GM10248 (cell line): ENCODE measurements at regions of chr1 and their contacts with region 1.

Region 1: DNA sequence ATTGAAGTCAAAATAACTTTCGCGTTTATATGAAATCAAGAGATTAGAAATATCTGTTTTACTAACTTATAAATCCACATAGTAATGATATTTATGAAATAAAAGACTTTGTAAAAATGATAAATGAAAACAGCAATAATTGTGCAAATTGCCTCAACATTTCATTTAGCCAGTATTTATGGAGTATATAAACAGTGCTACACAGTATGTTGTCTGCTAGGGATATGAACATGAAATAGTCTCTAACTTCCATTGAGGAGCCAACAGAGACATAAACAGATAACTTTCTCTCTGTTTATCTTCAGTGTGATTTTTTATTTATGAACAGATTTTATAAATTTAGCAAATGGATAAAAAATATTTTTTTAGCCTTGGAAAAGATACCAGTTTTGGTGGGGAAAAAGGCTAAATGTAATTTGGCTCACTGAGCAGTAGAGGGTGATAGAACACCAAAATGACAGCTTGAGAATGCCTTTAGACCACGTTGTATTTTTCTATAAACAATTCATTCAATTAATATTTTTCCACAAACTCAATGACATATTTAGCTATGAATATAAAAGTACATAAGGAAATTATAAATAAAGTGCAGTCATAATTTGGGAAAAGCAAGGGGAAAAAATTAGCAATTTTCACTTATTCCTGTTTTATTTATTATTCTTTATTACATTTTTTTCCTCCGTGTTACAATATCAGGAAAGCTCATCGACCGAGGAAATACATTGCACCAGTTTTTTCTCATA is 47.5 kb upstream of the EEIG2 start:
- DNase-seq: no peak
- CTCF ChIP-seq: peak; percentile 82

Region 2: GRCh38 chr1:108533351-108534083 is 21.1 kb after region 1 on chr1:
- CTCF ChIA-PET with region 1: interaction called, 18 read pairs
- POLR2A ChIA-PET with region 1: no interaction called
- DNase-seq: peak; percentile 43
- CTCF ChIP-seq: no peak

Region 3: DNA sequence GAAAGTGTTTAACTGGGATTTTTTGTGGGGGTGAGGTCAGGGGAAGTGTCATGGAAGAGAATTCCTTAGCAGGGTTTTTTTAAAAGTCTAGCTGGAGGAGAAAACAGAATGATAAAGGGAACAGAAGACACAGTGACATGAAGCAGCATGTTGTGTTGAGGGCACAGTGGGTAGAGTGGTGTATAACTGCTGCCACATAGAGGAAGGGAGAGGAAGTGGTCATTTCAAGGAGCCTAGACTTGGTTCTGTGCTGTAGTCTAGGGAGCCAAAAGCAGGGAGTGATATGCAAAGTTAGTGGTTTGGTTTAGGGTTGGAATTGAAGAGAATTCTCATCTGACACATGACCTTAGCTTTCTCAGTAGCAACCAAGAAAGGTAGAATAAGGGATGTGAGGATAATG is 57.7 kb after region 1 on chr1:
- CTCF ChIA-PET with region 1: interaction called, 179 read pairs
- POLR2A ChIA-PET with region 1: no interaction called
- DNase-seq: peak; percentile 45
- CTCF ChIP-seq: peak; percentile 58

Region 4: GRCh38 chr1:108643492-108644335 is 131.3 kb after region 1 on chr1:
- CTCF ChIA-PET with region 1: interaction called, 55 read pairs
- POLR2A ChIA-PET with region 1: no interaction called
- DNase-seq: peak; percentile 55
- CTCF ChIP-seq: peak; percentile 57

Region 5: DNA sequence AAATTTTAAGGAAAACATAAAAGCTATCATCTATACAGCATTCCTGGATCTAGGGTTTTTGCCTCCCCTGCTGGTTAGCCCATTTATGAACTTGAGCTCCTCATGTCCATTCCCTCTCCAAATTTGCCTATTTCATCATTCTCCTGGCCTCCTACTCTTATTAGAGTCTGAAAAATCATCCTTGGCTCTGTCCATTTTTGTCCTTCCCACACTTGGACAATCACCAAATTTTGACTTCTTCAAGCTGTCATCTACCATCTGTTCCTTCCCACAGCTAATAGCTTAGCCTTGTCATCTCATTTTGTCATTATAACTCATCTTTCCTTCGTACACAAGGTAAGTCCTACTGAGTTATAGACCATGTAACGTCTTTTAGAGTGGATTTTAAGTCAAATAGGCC is 150.7 kb after region 1 on chr1:
- CTCF ChIA-PET with region 1: no interaction called
- POLR2A ChIA-PET with region 1: no interaction called
- DNase-seq: no peak
- CTCF ChIP-seq: no peak